HepG2 (cell line): ENCODE measurements at regions of chr3 and their contacts with region 1.

Region 1: GRCh38 chr3:73502609-73503583 is 121.8 kb downstream of the PDZRN3 start:
- DNase-seq: peak; percentile 38
- ATAC-seq: peak; percentile 81
- H3K4me3 ChIP-seq: no peak overlapping the region
- H3K27ac ChIP-seq: no peak overlapping the region
- H3K4me1 ChIP-seq: no peaks in the 10 kb centered on the region
- H3K27me3 ChIP-seq: no peaks in the 10 kb centered on the region
- CTCF ChIP-seq: peak; percentile 86
- EP300 ChIP-seq: no peak
- POLR2A ChIP-seq: no peak
- RAD21 ChIP-seq: peak; percentile 60

Region 2: GRCh38 chr3:73094125-73094524 is 408.8 kb before region 1 on chr3:
- CTCF ChIA-PET with region 1: no interaction called
- POLR2A ChIA-PET with region 1: no interaction called
- in situ Hi-C with region 1: loop called (anchors 5 kb)
- intact Hi-C with region 1: no loop called
- DNase-seq: peak; percentile 23
- ATAC-seq: peak; percentile 80
- H3K4me3 ChIP-seq: no peak overlapping the region
- H3K27ac ChIP-seq: no peak overlapping the region
- H3K4me1 ChIP-seq: no peaks in the 10 kb centered on the region
- H3K27me3 ChIP-seq: no peaks in the 10 kb centered on the region
- CTCF ChIP-seq: 0 out of 2 replicates have a peak, but pooled peaks have one; percentile 22
- EP300 ChIP-seq: no peak
- POLR2A ChIP-seq: no peak
- RAD21 ChIP-seq: no peak

Region 3: GRCh38 chr3:73100741-73101559 is 401.9 kb before region 1 on chr3:
- CTCF ChIA-PET with region 1: interaction called, 40 read pairs
- POLR2A ChIA-PET with region 1: no interaction called
- in situ Hi-C with region 1: loop called (anchors 5 kb)
- intact Hi-C with region 1: loop called (anchors 1 kb)
- DNase-seq: peak; percentile 75
- ATAC-seq: peak; percentile 95
- H3K4me3 ChIP-seq: no peak overlapping the region
- H3K27ac ChIP-seq: no peak overlapping the region
- H3K4me1 ChIP-seq: peaks cover 16% of the 10 kb centered on the region
- H3K27me3 ChIP-seq: no peaks in the 10 kb centered on the region
- CTCF ChIP-seq: peak; percentile 91
- EP300 ChIP-seq: no peak
- POLR2A ChIP-seq: no peak
- RAD21 ChIP-seq: peak; percentile 69; the same call in 1 of the 2 replicates

Region 4: DNA sequence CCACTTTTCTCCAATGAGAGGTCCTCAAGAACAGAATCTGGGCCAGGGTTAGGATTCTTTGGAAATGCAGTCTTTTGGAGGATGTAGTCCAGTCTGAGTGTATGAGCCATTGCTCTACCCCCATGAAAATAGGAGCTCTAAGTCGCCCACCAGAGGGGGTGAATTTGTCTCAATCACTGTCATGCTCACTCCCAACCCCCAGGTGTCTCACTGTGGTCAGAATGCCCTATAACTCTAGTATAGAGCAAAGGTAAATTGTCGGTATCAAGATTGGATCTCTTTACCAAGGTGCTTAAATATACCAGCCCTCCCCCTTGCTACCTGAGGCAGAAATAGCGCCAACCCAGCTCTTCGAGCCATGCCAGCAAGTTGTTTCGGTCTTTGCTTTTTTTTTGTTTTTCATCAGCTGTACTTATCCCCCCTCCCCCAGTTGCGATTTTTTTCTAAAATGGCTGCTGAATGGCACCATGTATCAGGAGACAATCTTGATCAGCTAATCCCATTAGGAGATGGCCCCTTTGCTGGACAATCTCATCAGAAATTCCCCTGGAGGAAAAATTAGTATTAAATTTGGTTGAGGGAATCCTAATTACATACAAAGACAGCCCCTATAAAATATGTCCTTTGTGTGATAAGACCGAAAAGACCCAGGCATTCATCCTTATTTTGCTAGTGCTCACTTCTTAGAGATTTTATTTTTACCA is 310.7 kb before region 1 on chr3:
- CTCF ChIA-PET with region 1: interaction called, 6 read pairs
- POLR2A ChIA-PET with region 1: no interaction called
- in situ Hi-C with region 1: loop called (anchors 10 kb)
- intact Hi-C with region 1: no loop called
- DNase-seq: peak; percentile 58
- ATAC-seq: peak; percentile 100
- H3K4me3 ChIP-seq: no peak overlapping the region
- H3K27ac ChIP-seq: no peak overlapping the region
- H3K4me1 ChIP-seq: no peaks in the 10 kb centered on the region
- H3K27me3 ChIP-seq: no peaks in the 10 kb centered on the region
- CTCF ChIP-seq: peak; percentile 40
- EP300 ChIP-seq: no peak
- POLR2A ChIP-seq: no peak
- RAD21 ChIP-seq: peak; percentile 46; the same call in 1 of the 2 replicates

Region 5: GRCh38 chr3:73409118-73409763 is 93.7 kb before region 1 on chr3:
- CTCF ChIA-PET with region 1: no interaction called
- POLR2A ChIA-PET with region 1: no interaction called
- in situ Hi-C with region 1: no loop called
- intact Hi-C with region 1: no loop called
- DNase-seq: no peak
- ATAC-seq: no peak
- H3K4me3 ChIP-seq: no peak overlapping the region
- H3K27ac ChIP-seq: no peak overlapping the region
- H3K4me1 ChIP-seq: no peaks in the 10 kb centered on the region
- H3K27me3 ChIP-seq: no peaks in the 10 kb centered on the region
- CTCF ChIP-seq: no peak
- EP300 ChIP-seq: no peak
- POLR2A ChIP-seq: no peak
- RAD21 ChIP-seq: no peak

Region 6: DNA sequence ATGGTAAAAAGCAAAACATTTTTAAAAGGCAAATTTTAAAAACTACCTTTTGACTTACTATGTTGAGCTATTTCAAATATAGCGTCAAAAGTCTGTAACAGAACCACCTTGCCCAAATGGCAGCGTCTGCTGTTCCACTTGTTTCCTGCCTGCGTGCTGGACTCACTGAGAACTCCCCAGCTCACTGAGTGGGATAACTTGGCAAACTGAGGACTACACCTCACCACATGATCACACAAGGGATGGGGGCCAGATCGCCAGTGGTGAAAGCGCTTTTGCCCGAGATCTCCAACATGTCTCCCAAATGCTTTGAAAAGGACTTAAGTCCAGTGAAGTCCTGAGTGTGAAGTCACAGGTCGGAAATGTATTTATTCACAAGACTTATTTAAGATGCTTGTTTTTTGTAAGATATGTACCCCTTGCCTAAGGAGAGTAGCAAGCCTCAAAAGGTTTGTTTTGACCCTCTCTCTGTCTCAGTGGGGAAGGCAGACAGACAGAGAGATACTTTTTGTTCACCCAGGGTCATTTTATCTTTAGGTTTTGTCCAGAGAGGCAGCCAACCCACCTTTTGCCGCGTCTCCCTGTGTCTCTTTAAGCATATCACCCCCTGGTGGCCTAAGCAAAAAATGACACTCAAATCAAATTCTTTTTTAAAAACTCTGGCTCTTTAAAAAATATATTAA is 70.7 kb before region 1 on chr3:
- CTCF ChIA-PET with region 1: no interaction called
- POLR2A ChIA-PET with region 1: no interaction called
- in situ Hi-C with region 1: no loop called
- intact Hi-C with region 1: loop called (anchors 1 kb)
- DNase-seq: peak; percentile 53
- ATAC-seq: no peak
- H3K4me3 ChIP-seq: no peak overlapping the region
- H3K27ac ChIP-seq: no peak overlapping the region
- H3K4me1 ChIP-seq: no peaks in the 10 kb centered on the region
- H3K27me3 ChIP-seq: no peaks in the 10 kb centered on the region; a peak in 1 of 5 replicates
- CTCF ChIP-seq: peak; percentile 53
- EP300 ChIP-seq: no peak
- POLR2A ChIP-seq: no peak
- RAD21 ChIP-seq: no peak

Region 7: GRCh38 chr3:73451306-73451944 is 51.5 kb before region 1 on chr3:
- CTCF ChIA-PET with region 1: interaction called, 3 read pairs
- POLR2A ChIA-PET with region 1: no interaction called
- in situ Hi-C with region 1: no loop called
- intact Hi-C with region 1: loop called (anchors 1 kb)
- DNase-seq: no peak
- ATAC-seq: no peak
- H3K4me3 ChIP-seq: no peak overlapping the region
- H3K27ac ChIP-seq: no peak overlapping the region
- H3K4me1 ChIP-seq: no peaks in the 10 kb centered on the region
- H3K27me3 ChIP-seq: no peaks in the 10 kb centered on the region
- CTCF ChIP-seq: no peak
- EP300 ChIP-seq: no peak
- POLR2A ChIP-seq: no peak
- RAD21 ChIP-seq: no peak

Region 8: DNA sequence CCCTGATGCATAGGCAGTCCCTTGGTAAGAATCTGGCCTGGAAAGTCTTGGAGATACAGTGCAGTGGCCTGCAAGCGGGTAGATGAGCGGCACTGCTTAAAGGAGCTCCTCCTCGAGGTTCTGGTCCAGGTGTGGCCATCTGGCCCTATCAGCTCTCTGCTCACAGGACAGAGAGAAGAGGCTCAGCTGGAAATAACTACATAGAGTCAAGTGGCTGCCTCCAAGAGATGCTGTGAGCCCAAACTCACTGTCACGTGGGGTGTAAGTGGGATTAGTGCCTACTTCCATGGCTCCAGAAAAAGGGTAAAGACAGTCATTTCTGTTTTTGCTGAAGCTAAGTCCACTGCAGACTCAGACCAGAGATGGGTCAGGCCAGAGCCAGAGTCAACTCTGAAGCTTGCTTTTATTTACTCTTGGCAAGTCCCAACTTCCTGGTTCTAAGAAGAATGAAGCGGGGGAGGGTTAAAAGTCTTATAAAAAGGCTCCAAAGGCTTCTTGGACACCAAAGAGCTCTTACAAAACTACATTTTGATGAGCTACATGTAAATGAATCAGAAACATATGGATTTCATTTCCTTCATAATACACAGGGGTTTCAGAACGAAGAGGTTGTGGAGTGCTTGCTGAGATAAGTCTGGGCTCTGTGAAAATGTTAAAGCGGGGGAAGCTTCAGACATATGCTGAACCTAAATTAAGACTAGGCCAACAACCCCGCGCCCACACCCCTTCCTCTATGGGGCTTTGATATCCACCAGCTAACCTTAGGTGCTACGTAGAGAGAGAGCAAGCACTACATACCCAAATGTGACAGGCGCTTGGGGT is 44.7 kb after region 1 on chr3:
- CTCF ChIA-PET with region 1: no interaction called
- POLR2A ChIA-PET with region 1: no interaction called
- in situ Hi-C with region 1: no loop called
- intact Hi-C with region 1: no loop called
- DNase-seq: no peak
- ATAC-seq: no peak
- H3K4me3 ChIP-seq: no peak overlapping the region
- H3K27ac ChIP-seq: no peak overlapping the region
- H3K4me1 ChIP-seq: no peaks in the 10 kb centered on the region
- H3K27me3 ChIP-seq: no peaks in the 10 kb centered on the region; a peak in 1 of 5 replicates
- CTCF ChIP-seq: no peak
- EP300 ChIP-seq: no peak
- POLR2A ChIP-seq: no peak
- RAD21 ChIP-seq: no peak

Region 9: GRCh38 chr3:73624821-73625665 is 122.1 kb after region 1 on chr3 and contains the start of gene PDZRN3:
- CTCF ChIA-PET with region 1: no interaction called
- POLR2A ChIA-PET with region 1: no interaction called
- in situ Hi-C with region 1: no loop called
- intact Hi-C with region 1: no loop called
- DNase-seq: no peak
- ATAC-seq: peak; percentile 66
- H3K4me3 ChIP-seq: peak within 1 kb of the TSS in 1 of 3 experiments; percentile 62; a peak in 2 of 6 replicates
- H3K27ac ChIP-seq: no peak within 1 kb of the TSS
- H3K4me1 ChIP-seq: peaks cover 26% of the 10 kb centered on the region
- H3K27me3 ChIP-seq: peaks cover 6 to 24% of the 10 kb centered on the region in 2 experiments; a peak in 4 of 5 replicates
- CTCF ChIP-seq: no peak
- EP300 ChIP-seq: no peak
- POLR2A ChIP-seq: no peak
- RAD21 ChIP-seq: no peak
- total RNA-seq, gene PDZRN3: not detected in 2 replicates